Heart left ventricle (tissue), 16 donors: ENCODE measurements at regions of chr11 and their contacts with region 1.

Region 1: DNA sequence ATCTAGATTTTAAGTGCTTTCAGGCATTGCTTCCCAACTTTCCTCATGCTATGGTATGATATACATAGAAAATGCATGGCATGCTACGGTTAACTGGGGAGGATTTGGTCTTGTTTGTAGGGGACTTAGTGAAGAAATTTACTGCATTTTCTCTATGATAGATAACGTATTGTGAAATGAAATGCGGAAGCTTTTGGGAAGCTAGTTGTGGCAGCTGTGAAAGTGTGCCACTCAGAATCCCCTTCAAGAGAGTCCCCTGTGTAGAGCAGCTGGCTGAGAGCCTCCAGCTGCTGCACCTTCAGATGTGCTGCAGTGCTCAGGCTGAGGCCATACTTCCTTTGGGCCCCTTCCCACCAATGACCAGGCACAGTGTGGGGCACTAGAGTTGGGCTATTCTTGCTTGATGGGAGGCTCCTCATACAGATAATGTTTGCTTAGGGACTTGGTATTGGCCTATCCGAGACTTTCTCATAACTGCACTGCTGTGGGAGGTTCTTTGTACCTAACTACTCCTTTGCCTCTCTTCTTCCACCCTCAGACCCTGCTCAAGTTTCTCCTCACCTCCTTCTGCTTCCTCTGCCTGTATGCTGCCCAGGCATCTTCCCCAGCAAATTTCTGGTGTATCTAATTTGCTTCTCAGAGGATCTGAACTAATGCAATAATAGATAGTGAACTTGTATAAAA is 67.3 kb downstream of the HIPK3 start:
- DNase-seq: no peak
- ATAC-seq: peak in 3 of 4 donors; percentile 21 to 48 (median 32)
- H3K4me3 ChIP-seq: no peak overlapping the region
- H3K27ac ChIP-seq: peak overlapping the region in 6 of 12 donors; percentile 4 to 31 (median 10)
- H3K4me1 ChIP-seq: peaks cover 14 to 97% (median 78%) of the 10 kb centered on the region in 12 donors
- H3K27me3 ChIP-seq: no peaks in the 10 kb centered on the region
- CTCF ChIP-seq: no peak
- POLR2A ChIP-seq: no peak

Region 2: GRCh38 chr11:33168709-33169200 is 155.7 kb before region 1 on chr11:
- intact Hi-C with region 1: loop called in 6 of 10 experiments (anchors 2 to 5 kb)
- DNase-seq: no peak
- ATAC-seq: peak in 3 of 4 donors; percentile 28 to 52 (median 29)
- H3K4me3 ChIP-seq: no peak overlapping the region
- H3K27ac ChIP-seq: peak overlapping the region in 1 of 12 donors; percentile 33
- H3K4me1 ChIP-seq: peaks cover 0 to 20% (median 5%) of the 10 kb centered on the region in 12 donors
- H3K27me3 ChIP-seq: no peaks in the 10 kb centered on the region
- CTCF ChIP-seq: no peak
- POLR2A ChIP-seq: no peak

Region 3: GRCh38 chr11:33273656-33274055 is 50.8 kb before region 1 on chr11:
- intact Hi-C with region 1: loop called in 1 of 10 experiments (anchors 5 kb)
- DNase-seq: no peak
- ATAC-seq: no peak
- H3K4me3 ChIP-seq: no peak overlapping the region
- H3K27ac ChIP-seq: peak overlapping the region in 3 of 12 donors; percentile 2 to 39 (median 23)
- H3K4me1 ChIP-seq: peaks cover 2 to 90% (median 73%) of the 10 kb centered on the region in 12 donors
- H3K27me3 ChIP-seq: no peaks in the 10 kb centered on the region
- CTCF ChIP-seq: no peak
- POLR2A ChIP-seq: no peak